ENCODE measurements at regions of chr2 and their contacts with region 1.

Region 1: GRCh38 chr2:61878756-61879155 is 9.7 kb downstream of the CCT4 start:
- DNase-seq: no peak
- ATAC-seq: no peak
- H3K4me3 ChIP-seq: no peak overlapping the region
- H3K27ac ChIP-seq: no peak overlapping the region
- H3K4me1 ChIP-seq: no peaks in the 10 kb centered on the region
- H3K27me3 ChIP-seq: no peaks in the 10 kb centered on the region
- CTCF ChIP-seq: no peak
- POLR2A ChIP-seq: no peak
- RAD21 ChIP-seq: no peak

Region 2: GRCh38 chr2:61512768-61513398 is 365.9 kb before region 1 on chr2:
- CTCF ChIA-PET with region 1: no interaction called
- POLR2A ChIA-PET with region 1: no interaction called
- dilution Hi-C with region 1: no loop called
- in situ Hi-C with region 1: loop called (anchors 5 kb)
- intact Hi-C with region 1: no loop called
- DNase-seq: no peak
- ATAC-seq: no peak
- H3K4me3 ChIP-seq: no peak overlapping the region
- H3K27ac ChIP-seq: no peak overlapping the region
- H3K4me1 ChIP-seq: no peaks in the 10 kb centered on the region
- H3K27me3 ChIP-seq: no peaks in the 10 kb centered on the region
- CTCF ChIP-seq: no peak
- POLR2A ChIP-seq: no peak
- RAD21 ChIP-seq: no peak

Region 3: DNA sequence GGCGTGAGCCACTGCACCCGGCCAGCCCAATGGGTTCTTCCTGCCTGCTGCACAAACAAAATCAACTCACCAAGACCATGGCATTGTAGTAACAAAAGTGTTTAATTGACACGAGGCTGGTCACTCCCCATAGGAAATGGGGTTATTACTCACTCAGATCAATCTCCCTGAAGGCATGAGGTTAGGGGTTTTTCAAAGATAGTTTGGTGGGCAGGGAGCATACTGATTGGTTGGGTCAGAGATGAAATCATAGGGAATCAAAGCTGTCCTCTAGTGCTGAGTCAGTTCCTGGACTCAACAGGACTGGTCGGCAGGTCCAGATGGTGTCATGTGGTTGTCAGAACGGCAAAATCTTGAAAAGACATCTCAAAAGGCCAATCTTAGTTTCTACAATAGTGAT is 505.1 kb after region 1 on chr2:
- CTCF ChIA-PET with region 1: no interaction called
- POLR2A ChIA-PET with region 1: no interaction called
- dilution Hi-C with region 1: no loop called
- in situ Hi-C with region 1: no loop called
- intact Hi-C with region 1: no loop called
- DNase-seq: peak; percentile 20
- ATAC-seq: no peak
- H3K4me3 ChIP-seq: no peak overlapping the region
- H3K27ac ChIP-seq: no peak overlapping the region
- H3K4me1 ChIP-seq: no peaks in the 10 kb centered on the region
- H3K27me3 ChIP-seq: peaks cover 2% of the 10 kb centered on the region; the same call in 1 of the 2 replicates
- CTCF ChIP-seq: no peak
- POLR2A ChIP-seq: no peak
- RAD21 ChIP-seq: no peak